Sigmoid colon (tissue), 7 donors: ENCODE measurements at regions of chr5 and their contacts with region 1.

Region 1: GRCh38 chr5:157743163-157744050 is at the start of gene LSM11:
- DNase-seq: peak; percentile 93
- H3K4me3 ChIP-seq: peak within 1 kb of the TSS; percentile 72 to 97 (median 90)
- H3K27ac ChIP-seq: peak within 1 kb of the TSS; percentile 80 to 91 (median 88)
- H3K4me1 ChIP-seq: peaks cover 0 to 45% (median 33%) of the 10 kb centered on the region in 4 donors
- H3K27me3 ChIP-seq: no peaks in the 10 kb centered on the region
- CTCF ChIP-seq: peak; percentile 90 to 99 (median 92)
- EP300 ChIP-seq: no peak
- POLR2A ChIP-seq: no peak
- total RNA-seq, gene LSM11: 12.1 to 16.6 (median 15.9) TPM

Region 2: DNA sequence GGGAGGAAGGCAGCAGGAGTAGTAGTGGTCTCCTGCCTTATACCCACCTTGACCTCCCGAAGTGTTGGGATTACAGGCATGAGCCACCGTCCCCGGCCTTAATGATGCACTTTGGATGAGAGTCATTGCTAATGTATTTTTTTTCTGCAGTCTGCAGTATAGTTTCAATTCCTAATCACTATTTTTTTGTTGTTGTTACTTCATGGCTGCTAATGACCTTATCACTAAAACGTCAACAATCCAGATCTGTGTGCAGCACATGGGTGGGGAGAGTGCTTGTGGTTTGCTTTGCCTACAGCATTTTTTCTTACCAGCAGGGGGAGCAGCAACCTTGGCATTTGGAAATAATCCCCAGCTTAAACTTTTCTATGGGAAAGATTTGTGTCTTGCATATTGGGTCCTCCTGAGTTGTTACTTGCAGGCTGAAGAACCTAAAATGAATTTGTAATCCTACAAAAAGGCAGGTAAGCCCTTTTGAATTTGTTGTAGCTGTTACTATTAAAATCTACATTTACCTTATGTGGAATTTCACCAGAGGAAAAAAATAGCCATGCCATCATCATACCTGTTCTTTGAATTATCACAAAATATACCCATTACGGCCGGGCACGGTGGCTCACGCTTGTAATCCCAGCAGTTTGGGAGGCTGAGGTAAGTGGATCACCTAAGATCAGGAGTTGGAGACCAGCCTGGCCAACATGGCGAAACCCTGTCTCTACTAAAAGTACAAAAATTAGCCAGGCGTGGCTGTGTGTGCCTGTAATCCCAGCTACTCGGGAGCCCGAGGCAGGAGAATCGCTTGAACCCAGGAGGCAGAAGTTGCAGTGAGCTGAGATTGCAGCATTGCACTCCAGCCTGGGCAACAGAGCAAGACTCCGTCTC is 594.4 kb before region 1 on chr5:
- intact Hi-C with region 1: loop called (anchors 5 kb)
- DNase-seq: no peak
- H3K4me3 ChIP-seq: no peak overlapping the region
- H3K27ac ChIP-seq: no peak overlapping the region
- H3K4me1 ChIP-seq: peaks cover 0 to under 1% (median 0%) of the 10 kb centered on the region in 4 donors
- H3K27me3 ChIP-seq: no peaks in the 10 kb centered on the region
- CTCF ChIP-seq: peak; percentile 25 to 81 (median 62)
- EP300 ChIP-seq: no peak
- POLR2A ChIP-seq: no peak

Region 3: DNA sequence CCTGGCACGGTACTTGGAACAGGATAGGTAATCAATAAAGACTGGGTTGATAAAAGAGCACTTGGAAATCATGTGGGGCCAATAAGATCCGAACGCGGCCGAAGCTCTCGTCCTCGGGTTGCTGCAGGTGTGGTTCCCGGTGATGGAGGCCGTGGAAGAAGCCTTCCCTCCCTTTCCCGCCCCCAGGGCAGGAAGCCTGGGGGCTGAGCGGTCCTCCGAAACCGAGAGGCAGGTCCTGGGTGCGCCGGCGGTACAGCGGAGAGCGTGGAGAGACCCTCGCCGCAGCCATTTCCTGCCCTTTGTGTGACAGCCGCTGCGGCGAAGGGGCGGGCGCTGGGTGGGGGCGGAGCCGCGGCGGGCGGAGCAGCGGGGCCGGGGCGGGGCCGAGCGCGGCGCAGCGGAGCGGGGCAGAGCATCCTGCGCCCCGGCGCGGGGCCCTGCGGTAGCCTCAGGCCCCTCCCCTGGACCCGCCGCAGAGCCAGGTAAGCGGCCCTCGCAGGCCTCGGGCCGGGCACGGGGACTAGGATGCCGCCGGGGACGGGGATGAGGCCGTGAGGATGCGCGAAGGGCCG is 477.6 kb before region 1 on chr5 and contains the start of gene CYFIP2:
- intact Hi-C with region 1: loop called (anchors 10 kb)
- DNase-seq: peak; percentile 68
- H3K4me3 ChIP-seq: peak within 1 kb of the TSS; percentile 40 to 93 (median 74)
- H3K27ac ChIP-seq: peak within 1 kb of the TSS in 2 of 4 donors; percentile 33 to 34
- H3K4me1 ChIP-seq: peaks cover 0 to 13% (median 10%) of the 10 kb centered on the region in 4 donors
- H3K27me3 ChIP-seq: no peaks in the 10 kb centered on the region
- CTCF ChIP-seq: no peak
- EP300 ChIP-seq: no peak
- POLR2A ChIP-seq: no peak
- total RNA-seq, gene CYFIP2: 13.8 to 37.8 (median 29.3) TPM

Region 4: GRCh38 chr5:157328277-157328912 is 415.0 kb before region 1 on chr5:
- intact Hi-C with region 1: loop called (anchors 1 kb)
- DNase-seq: peak; percentile 84
- H3K4me3 ChIP-seq: peak overlapping the region in 2 of 4 donors; percentile 33 to 35
- H3K27ac ChIP-seq: peak overlapping the region in 2 of 4 donors; percentile 55 to 59
- H3K4me1 ChIP-seq: peaks cover 0 to 11% (median 8%) of the 10 kb centered on the region in 4 donors
- H3K27me3 ChIP-seq: no peaks in the 10 kb centered on the region
- CTCF ChIP-seq: peak; percentile 87 to 90 (median 90)
- EP300 ChIP-seq: no peak
- POLR2A ChIP-seq: no peak

Region 5: DNA sequence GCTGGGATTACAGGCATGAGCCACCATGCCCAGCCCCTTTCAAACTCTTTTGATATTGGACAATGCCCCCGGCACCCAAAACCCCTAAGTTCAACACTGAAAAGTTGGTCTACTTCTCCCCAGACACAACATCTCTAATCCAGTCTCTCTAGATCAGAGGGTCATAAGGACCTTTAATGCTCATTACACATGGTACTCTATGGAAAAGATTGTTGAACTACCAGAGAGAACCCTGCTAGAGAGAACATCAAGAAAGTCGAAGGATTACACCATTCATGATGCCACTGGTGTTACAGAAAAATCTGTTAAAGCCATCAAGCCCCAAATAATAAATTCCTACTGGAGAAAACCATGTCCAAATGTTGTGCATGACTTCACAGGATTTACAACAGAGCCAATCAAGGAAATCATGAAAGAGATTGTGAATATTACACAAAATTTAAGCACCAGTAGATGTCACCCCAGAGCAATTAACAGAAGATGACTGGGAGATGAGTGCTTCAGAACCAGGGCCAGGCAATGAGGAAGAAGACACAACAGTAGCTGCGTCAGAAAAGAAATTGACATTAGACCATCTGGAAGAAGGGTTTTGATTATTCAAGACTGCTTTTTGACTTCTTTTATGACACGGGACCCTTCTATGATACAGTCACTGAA is 311.7 kb before region 1 on chr5:
- intact Hi-C with region 1: loop called (anchors 5 kb)
- DNase-seq: no peak
- H3K4me3 ChIP-seq: no peak overlapping the region
- H3K27ac ChIP-seq: peak overlapping the region in 3 of 4 donors; percentile 7 to 41 (median 22)
- H3K4me1 ChIP-seq: no peaks in the 10 kb centered on the region
- H3K27me3 ChIP-seq: no peaks in the 10 kb centered on the region
- CTCF ChIP-seq: peak in 3 of 4 experiments; percentile 46 to 53 (median 52)
- EP300 ChIP-seq: no peak
- POLR2A ChIP-seq: no peak

Region 6: DNA sequence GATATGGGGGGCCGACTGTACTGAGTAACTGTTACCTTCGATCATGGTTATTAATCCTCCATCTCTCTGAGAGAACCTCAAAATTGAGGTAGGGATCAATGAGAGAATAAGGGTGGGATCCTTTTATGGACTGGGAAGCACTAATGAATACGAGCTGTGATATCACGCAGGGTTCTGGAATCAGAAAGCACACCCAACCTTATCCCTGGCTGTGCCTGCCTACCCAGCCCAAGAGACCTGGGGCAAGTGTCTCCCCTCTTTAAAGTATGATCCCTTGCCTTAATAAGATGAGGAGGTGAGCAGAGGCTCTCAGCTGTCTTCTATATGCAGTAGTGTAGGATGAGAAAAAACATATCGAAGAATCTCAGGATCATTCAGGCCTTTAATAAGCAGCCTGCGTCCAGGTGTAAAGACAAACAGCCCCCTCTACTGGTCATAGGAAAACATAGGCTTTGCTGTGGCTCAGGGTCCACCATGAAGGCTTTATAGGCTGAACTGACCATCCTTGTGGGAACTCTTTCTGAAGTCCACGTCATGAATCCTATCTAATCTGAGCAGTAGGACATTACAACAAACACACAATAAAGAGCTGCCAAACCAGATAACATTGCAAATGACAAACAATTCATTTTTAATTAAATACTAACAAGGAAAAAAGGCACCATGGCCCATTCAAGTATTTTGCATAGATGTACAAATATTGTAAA is 266.6 kb before region 1 on chr5:
- intact Hi-C with region 1: loop called (anchors 5 kb)
- DNase-seq: peak; percentile 67
- H3K4me3 ChIP-seq: no peak overlapping the region
- H3K27ac ChIP-seq: peak overlapping the region; percentile 38 to 88 (median 84)
- H3K4me1 ChIP-seq: peaks cover 0 to 86% (median 53%) of the 10 kb centered on the region in 4 donors
- H3K27me3 ChIP-seq: no peaks in the 10 kb centered on the region
- CTCF ChIP-seq: peak; percentile 68 to 88 (median 80)
- EP300 ChIP-seq: no peak
- POLR2A ChIP-seq: no peak

Region 7: DNA sequence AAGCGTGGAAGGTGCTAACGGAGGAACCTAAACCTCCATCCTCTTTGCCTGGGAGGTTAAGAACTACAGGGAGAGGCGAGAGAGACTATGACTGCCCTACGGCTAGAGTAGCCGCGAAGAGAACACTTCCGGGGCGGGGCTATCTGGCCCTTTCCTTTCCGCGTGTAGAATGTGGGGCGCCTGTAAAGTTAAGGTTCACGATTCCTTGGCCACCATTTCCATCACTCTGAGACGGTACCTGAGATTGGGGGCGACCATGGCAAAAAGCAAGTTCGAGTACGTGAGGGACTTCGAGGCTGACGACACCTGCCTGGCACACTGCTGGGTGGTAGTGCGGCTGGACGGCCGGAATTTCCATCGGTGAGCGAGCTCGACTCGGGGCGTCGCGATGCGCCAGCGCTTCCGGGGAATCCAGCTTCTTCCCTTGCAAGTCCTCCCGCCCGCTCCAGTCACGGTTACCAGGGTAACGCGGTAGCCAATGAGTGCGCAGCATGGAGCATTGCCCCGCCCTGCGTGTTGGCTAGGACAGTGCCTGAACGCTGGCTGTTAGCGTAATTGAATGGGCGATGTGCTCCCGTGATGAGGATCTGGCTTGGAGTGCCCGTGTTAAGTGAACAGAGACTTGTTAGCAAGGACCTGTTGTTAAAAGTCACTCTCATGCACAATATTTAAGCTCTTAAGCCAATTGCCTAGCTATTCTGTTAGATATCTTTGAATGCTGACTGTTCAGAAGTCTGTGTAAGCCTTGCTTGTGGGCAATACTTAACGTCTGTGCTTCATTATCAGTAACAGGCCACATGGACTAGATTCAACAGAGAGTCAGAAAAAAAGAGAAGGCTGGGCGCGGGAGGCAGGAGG is 11.9 kb before region 1 on chr5 and contains the start of gene THG1L:
- intact Hi-C with region 1: loop called (anchors 1 kb)
- DNase-seq: peak; percentile 99
- H3K4me3 ChIP-seq: peak within 1 kb of the TSS; percentile 68 to 80 (median 74)
- H3K27ac ChIP-seq: peak within 1 kb of the TSS; percentile 94 to 96 (median 94)
- H3K4me1 ChIP-seq: peaks cover 0 to 17% (median 12%) of the 10 kb centered on the region in 4 donors
- H3K27me3 ChIP-seq: no peaks in the 10 kb centered on the region
- CTCF ChIP-seq: no peak
- EP300 ChIP-seq: no peak
- POLR2A ChIP-seq: peak in 1 of 2 donors; percentile 19
- total RNA-seq, gene THG1L: 19.7 to 28.6 (median 23.7) TPM